CD4-positive, alpha-beta memory T cell (primary cell): ENCODE measurements at regions of chr22 and their contacts with region 1.

Region 1: DNA sequence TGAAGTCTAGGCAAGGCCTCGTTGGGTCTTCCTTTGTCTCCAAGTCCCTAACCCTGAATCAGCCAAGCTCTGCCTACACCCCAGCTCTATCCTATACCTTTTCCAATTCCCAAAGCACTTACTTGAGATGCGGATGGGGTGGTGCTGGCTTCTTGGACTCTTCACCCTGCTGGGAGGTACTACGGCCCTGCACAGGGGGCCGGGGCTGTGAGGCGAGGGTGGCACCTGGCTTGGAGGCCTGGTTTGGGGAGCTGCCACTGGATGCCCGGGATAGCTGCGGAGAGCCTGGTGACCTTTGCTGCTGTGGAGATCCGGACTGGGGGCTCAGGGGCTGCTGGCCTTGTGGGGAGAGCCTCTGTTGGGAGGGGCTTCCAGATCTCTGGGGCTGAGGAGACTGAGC is 43.3 kb downstream of the FBXO7 start:
- DNase-seq: no peak
- H3K4me3 ChIP-seq: no peak overlapping the region
- H3K4me3 Mint-ChIP-seq: no peak overlapping the region
- H3K27ac ChIP-seq: no peak overlapping the region
- H3K27ac Mint-ChIP-seq: no peak overlapping the region
- H3K4me1 ChIP-seq: no peaks in the 10 kb centered on the region
- H3K4me1 Mint-ChIP-seq: no peaks in the 10 kb centered on the region
- H3K27me3 ChIP-seq: no peaks in the 10 kb centered on the region
- H3K27me3 Mint-ChIP-seq: no peaks in the 10 kb centered on the region

Region 2: GRCh38 chr22:32528984-32529982 is 11.4 kb after region 1 on chr22:
- CTCF ChIA-PET with region 1: interaction called, 19 read pairs
- POLR2A ChIA-PET with region 1: no interaction called
- intact Hi-C with region 1: no loop called
- DNase-seq: peak; percentile 34 to 50 (median 42)
- H3K4me3 ChIP-seq: no peak overlapping the region
- H3K4me3 Mint-ChIP-seq: no peak overlapping the region
- H3K27ac ChIP-seq: no peak overlapping the region
- H3K27ac Mint-ChIP-seq: no peak overlapping the region
- H3K4me1 ChIP-seq: no peaks in the 10 kb centered on the region
- H3K4me1 Mint-ChIP-seq: no peaks in the 10 kb centered on the region
- H3K27me3 ChIP-seq: no peaks in the 10 kb centered on the region
- H3K27me3 Mint-ChIP-seq: peaks cover 7 to 8% of the 10 kb centered on the region in 2 donors